ENCODE measurements at regions of chrX and their contacts with region 1.

Region 1: GRCh38 chrX:56219700-56220099 is 12.5 kb upstream of the KLF8 start:
- DNase-seq: peak; percentile 36
- H3K4me3 Mint-ChIP-seq: no peak overlapping the region
- H3K27ac Mint-ChIP-seq: no peak overlapping the region
- H3K4me1 Mint-ChIP-seq: no peaks in the 10 kb centered on the region
- H3K27me3 Mint-ChIP-seq: peaks cover 22% of the 10 kb centered on the region
- CTCF ChIP-seq: peak; percentile 24

Region 2: DNA sequence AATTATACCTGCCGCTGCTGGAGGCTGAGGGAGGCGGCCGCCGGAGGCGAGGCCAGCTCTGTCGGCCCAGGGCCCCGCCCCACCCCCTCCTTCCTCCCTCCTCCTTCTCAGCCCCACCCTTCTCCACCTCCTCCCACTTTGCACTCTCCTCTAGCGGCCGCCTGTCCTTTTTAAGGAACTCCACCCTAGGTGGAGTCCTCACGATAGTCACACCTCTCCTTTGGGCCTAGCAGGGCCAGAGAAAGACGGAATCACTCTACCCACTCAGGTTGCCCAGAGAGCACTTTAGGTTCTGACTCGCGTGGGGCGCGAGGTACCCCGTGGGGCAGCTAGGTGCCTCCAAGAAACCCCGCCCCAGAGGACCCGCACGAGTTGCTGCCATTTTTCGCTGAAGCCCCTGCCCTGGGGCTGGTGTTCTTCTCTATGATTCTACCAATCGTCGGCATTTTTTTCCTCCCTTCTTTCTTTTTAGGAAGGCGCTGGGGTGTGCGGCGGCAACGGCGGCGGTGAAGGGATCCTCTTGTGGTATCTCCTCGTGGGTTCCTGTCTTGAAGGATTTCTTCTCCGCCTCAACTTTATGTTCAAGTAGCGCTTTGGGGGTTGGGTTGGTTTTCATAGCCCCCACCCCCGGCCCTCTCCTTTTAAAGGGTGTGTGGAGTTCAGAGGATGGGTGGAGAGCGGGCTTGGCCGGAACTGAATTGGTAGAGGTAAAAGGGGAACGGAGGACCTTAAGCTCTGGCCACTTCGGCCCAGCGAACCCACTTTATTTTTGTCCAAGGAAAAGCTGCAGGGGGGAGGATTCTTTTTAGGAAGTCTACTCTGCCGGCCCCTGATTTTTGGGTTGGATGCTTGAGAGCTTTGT is 12.8 kb after region 1 on chrX and contains the start of gene KLF8:
- CTCF ChIA-PET with region 1: interaction called, 12 read pairs
- POLR2A ChIA-PET with region 1: interaction called, 6 read pairs
- intact Hi-C with region 1: no loop called
- DNase-seq: peak; percentile 83
- H3K4me3 Mint-ChIP-seq: peak within 1 kb of the TSS; percentile 83
- H3K27ac Mint-ChIP-seq: peak within 1 kb of the TSS; percentile 84
- H3K4me1 Mint-ChIP-seq: peaks cover 13% of the 10 kb centered on the region
- H3K27me3 Mint-ChIP-seq: peaks cover 42% of the 10 kb centered on the region
- CTCF ChIP-seq: no peak
- total RNA-seq, gene KLF8: 12.6 and 14.0 TPM in 2 replicates